ENCODE measurements at regions of chr6 and their contacts with region 1.

Region 1: DNA sequence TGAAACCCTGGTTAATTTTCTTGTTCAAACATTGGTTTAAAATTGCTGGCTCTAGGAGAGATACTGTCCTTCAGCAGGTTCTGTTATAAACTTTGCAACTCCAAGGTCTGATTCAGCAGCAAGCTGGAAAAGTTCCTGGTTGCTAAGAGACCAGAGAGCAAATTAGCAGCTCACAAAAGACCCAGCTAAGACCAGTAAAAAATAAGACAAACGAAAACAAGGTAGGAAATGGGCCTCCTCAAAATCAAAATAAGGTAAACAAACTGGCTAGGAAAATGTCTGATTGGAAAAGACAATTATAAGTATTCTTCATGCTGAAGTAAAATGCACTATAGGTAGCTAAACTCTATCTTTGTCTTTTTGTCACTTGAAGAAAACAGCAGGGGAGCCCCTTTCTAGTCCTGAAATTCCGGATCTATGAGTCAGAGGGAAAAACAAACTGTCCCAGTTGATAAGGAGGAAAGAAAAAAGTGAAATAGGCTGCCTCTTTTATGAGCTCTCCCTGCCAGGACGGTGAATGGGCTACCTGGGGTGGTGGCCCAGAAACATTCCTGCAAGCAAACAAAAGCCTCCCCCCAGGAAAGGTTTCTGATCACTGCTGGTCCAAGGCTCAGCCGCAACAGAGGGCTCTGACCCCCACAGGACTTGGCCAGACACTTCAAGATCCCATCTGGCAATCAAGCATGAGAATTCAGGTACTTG is 41.6 kb downstream of the UNC5CL start:
- DNase-seq: peak; percentile 90
- ATAC-seq: peak; percentile 86
- H3K4me3 ChIP-seq: peak overlapping the region; percentile 23; the same call in 1 of the 2 replicates
- H3K27ac ChIP-seq: peak overlapping the region; percentile 88
- H3K4me1 ChIP-seq: peaks cover 30% of the 10 kb centered on the region
- H3K27me3 ChIP-seq: no peaks in the 10 kb centered on the region
- CTCF ChIP-seq: no peak

Region 2: DNA sequence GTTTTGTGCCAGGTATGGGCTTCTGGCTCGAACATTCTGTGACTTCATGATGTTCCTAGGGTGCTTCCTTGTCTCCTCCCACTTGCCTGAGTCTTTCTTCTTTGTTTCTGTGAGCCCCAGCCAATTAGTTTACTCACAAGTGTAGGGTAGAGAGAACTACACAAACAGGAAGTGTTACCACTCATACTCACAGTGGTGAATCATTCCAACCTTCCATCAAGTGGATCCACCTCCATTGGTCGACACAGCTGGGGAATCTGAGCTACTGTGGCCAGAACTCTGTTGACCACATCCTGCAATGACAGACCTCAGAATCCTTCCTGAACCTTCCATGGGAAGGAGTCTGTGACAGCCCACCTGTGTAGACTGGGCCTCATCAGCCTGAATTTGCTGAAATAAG is 35.2 kb before region 1 on chr6:
- CTCF ChIA-PET with region 1: interaction called, 3 read pairs
- POLR2A ChIA-PET with region 1: interaction called, 3 read pairs
- intact Hi-C with region 1: loop called (anchors 2 kb)
- DNase-seq: peak; percentile 95
- ATAC-seq: peak; percentile 88
- H3K4me3 ChIP-seq: no peak overlapping the region
- H3K27ac ChIP-seq: peak overlapping the region; percentile 78
- H3K4me1 ChIP-seq: peaks cover 44% of the 10 kb centered on the region
- H3K27me3 ChIP-seq: no peaks in the 10 kb centered on the region
- CTCF ChIP-seq: no peak

Region 3: GRCh38 chr6:41027799-41028628 is 30.6 kb after region 1 on chr6:
- CTCF ChIA-PET with region 1: interaction called, 7 read pairs
- POLR2A ChIA-PET with region 1: interaction called, 20 read pairs
- intact Hi-C with region 1: no loop called
- DNase-seq: peak; percentile 87
- ATAC-seq: peak; percentile 84
- H3K4me3 ChIP-seq: peak overlapping the region; percentile 69
- H3K27ac ChIP-seq: peak overlapping the region; percentile 31; the same call in 1 of the 2 replicates
- H3K4me1 ChIP-seq: peaks cover 28% of the 10 kb centered on the region
- H3K27me3 ChIP-seq: no peaks in the 10 kb centered on the region
- CTCF ChIP-seq: peak; percentile 98

Measured in PC-3 (cell line).